A549 (cell line): ENCODE measurements at regions of chr11 and their contacts with region 1.

Region 1: DNA sequence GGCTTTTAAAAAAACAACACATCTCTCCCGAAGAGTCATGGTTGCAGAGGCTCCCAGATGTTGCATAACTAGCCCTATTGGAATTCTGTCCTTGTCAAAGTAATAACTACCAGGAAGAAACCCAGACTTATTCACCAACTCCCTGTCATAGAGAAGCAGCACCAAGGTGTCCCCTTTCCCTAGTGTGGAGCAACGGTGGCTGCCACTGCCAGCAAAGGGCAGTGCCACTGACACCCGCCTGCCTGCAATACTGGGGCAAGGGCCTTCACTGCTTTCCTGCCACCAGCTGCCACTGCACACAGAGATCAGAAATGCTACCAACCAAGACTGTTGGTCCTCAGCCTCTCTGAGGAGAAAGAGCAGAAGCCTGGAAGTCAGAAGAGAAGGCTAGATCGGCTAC is 27.3 kb downstream of the NAP1L4 start:
- DNase-seq: no peak
- ATAC-seq: no peak
- H3K4me3 ChIP-seq: no peak overlapping the region
- H3K27ac ChIP-seq: no peak overlapping the region
- H3K4me1 ChIP-seq: no peaks in the 10 kb centered on the region
- CTCF ChIP-seq: no peak
- EP300 ChIP-seq: no peak
- POLR2A ChIP-seq: no peak
- RAD21 ChIP-seq: no peak

Region 2: GRCh38 chr11:2750682-2751387 is 213.9 kb before region 1 on chr11:
- CTCF ChIA-PET with region 1: no interaction called
- POLR2A ChIA-PET with region 1: no interaction called
- DNase-seq: no peak
- ATAC-seq: no peak
- H3K4me3 ChIP-seq: no peak overlapping the region
- H3K27ac ChIP-seq: no peak overlapping the region
- H3K4me1 ChIP-seq: 0 out of 3 replicates have a peak, but pooled peaks cover 5% of the 10 kb centered on the region
- CTCF ChIP-seq: no peak
- EP300 ChIP-seq: no peak
- POLR2A ChIP-seq: no peak
- RAD21 ChIP-seq: no peak

Region 3: DNA sequence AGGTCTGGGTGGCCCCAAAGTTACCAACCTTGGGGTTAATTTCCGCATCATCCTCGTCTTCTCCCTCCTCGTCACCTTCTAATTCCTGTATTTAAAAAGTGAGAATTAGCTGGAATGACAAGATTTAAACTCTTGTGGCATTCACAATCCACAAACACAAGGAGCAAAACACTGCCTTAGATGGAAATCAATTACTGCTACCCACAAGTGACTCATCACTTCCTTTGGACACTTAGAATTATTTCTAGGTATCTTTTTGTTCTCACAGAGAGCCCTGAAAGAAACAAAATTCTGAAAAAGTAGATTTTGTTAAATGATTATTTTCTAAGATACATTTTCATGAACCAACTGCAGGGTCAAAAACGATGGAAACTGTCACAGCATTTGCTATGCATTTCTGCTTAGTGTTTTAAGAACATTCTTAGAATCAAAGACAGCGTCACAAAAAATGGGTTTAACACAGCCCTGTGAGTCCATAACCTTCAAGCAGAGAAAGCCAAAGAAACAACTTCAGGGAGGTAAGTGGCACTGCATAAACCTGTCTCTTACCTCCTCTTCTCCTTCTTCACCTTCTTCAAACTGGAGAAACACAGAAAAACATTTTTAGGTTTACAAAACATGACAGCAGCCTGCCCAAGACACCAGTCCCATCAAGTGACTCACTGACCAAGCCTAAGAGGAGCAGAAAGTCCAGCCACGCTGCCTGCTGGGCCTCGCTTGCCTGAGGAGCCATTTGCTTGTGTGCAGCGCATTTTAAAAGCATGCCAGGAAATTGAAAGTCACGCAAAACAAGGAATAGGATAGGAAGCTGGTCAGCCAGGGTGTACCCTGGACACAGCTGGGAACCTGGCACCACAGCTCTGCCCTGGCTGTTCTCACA is 13.3 kb before region 1 on chr11:
- CTCF ChIA-PET with region 1: interaction called, 10 read pairs
- POLR2A ChIA-PET with region 1: no interaction called
- DNase-seq: no peak
- ATAC-seq: no peak
- H3K4me3 ChIP-seq: no peak overlapping the region
- H3K27ac ChIP-seq: no peak overlapping the region
- H3K4me1 ChIP-seq: peaks cover 5% of the 10 kb centered on the region; the same call in 1 of the 3 replicates
- CTCF ChIP-seq: no peak
- EP300 ChIP-seq: no peak
- POLR2A ChIP-seq: no peak
- RAD21 ChIP-seq: no peak

Region 4: GRCh38 chr11:3000082-3000961 is 35.5 kb after region 1 on chr11:
- CTCF ChIA-PET with region 1: no interaction called
- POLR2A ChIA-PET with region 1: no interaction called
- DNase-seq: no peak
- ATAC-seq: no peak
- H3K4me3 ChIP-seq: no peak overlapping the region
- H3K27ac ChIP-seq: no peak overlapping the region
- H3K4me1 ChIP-seq: no peaks in the 10 kb centered on the region
- CTCF ChIP-seq: no peak
- EP300 ChIP-seq: no peak
- POLR2A ChIP-seq: no peak
- RAD21 ChIP-seq: no peak